Caco-2 (cell line): ENCODE measurements at regions of chr6 and their contacts with region 1.

Region 1: GRCh38 chr6:10465629-10466504 is 51.0 kb upstream of the TFAP2A start:
- DNase-seq: peak; percentile 65 to 73
- H3K4me3 ChIP-seq: no peak overlapping the region
- H3K4me3 Mint-ChIP-seq: no peak overlapping the region
- H3K27ac Mint-ChIP-seq: no peak overlapping the region
- H3K4me1 ChIP-seq: no peaks in the 10 kb centered on the region
- H3K4me1 Mint-ChIP-seq: no peaks in the 10 kb centered on the region
- H3K27me3 ChIP-seq: no peaks in the 10 kb centered on the region
- H3K27me3 Mint-ChIP-seq: peaks cover 4% of the 10 kb centered on the region
- CTCF ChIP-seq: peak; percentile 50 to 67

Region 2: DNA sequence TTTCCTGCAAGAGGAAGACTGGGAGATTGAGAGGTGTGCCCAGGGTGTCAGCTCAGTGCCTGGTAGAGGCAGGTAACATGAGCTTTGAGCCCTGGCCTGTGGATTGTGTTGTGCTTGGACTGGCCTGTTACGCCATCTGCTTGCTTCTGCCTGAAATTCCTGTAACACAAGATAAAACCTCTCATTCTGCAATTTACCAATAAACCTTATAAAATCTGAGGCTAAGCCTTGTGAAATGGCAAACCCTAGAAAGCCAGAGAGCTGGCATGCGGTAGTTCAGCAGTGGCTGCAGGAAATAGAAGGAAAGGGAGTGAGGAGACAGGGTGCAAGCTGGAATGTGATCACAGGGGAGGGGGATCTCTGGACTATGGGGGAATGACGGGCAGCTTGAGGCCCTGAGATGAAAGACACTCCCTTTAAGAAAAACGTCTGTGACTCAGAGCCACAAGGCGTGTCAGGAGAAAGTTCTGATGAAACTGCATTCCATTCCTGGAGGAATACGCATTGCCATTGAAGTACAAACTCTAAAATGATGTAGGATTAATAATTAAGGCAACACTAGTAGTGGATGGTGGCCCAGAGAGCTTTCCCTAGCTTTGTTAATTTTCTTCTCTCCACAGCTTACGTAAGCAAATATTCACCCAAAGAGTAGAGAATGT is 24.7 kb before region 1 on chr6:
- CTCF ChIA-PET with region 1: interaction called, 3 read pairs
- POLR2A ChIA-PET with region 1: no interaction called
- intact Hi-C with region 1: loop called (anchors 1 kb)
- DNase-seq: peak; percentile 82 to 90
- H3K4me3 ChIP-seq: no peak overlapping the region
- H3K4me3 Mint-ChIP-seq: peak overlapping the region; percentile 22
- H3K27ac Mint-ChIP-seq: peak overlapping the region; percentile 97
- H3K4me1 ChIP-seq: peaks cover 25% of the 10 kb centered on the region
- H3K4me1 Mint-ChIP-seq: peaks cover 12% of the 10 kb centered on the region
- H3K27me3 ChIP-seq: no peaks in the 10 kb centered on the region
- H3K27me3 Mint-ChIP-seq: no peaks in the 10 kb centered on the region
- CTCF ChIP-seq: no peak

Region 3: DNA sequence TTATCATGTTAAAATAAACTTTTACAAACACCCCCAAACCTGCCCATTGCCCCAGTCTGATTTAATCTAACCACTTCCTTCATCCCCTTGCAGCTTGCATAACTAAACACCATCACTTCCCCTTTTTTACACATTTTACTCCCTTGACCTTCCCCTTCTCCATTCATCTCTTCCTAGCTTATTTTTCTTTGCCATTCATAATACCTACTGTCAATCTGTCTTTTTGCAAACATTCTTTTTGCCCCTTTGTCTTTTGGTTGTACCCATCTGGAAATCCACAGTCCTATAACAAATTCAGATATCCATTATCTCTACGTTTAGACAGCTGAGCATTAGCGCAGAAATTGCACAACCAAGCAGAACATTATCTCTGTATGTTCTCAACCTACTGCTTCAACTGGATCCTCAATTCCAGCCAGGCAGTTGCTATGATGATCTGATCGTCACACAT is 177.4 kb after region 1 on chr6:
- CTCF ChIA-PET with region 1: no interaction called
- POLR2A ChIA-PET with region 1: no interaction called
- intact Hi-C with region 1: no loop called
- DNase-seq: no peak
- H3K4me3 ChIP-seq: no peak overlapping the region
- H3K4me3 Mint-ChIP-seq: no peak overlapping the region
- H3K27ac Mint-ChIP-seq: no peak overlapping the region
- H3K4me1 ChIP-seq: no peaks in the 10 kb centered on the region
- H3K4me1 Mint-ChIP-seq: peaks cover 10% of the 10 kb centered on the region
- H3K27me3 ChIP-seq: no peaks in the 10 kb centered on the region
- H3K27me3 Mint-ChIP-seq: no peaks in the 10 kb centered on the region
- CTCF ChIP-seq: no peak

Region 4: DNA sequence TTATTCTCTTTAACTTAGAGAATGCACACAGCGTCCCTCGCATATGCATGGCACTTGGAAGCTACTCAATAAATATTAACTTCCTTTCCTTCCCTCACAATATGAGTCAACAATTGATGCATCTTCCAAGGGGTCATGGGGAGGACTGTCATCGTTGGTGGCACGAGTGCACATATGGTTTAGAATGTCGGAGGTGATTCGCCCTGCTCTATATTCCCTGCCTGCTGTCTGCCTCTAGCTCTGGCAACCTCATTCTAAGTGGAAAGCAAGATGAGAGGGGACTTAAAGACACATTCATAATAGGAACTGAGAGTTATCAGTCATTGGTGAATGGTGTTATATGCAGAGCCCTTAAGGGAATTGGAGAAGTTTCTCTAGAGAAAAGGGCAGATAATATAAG is 327.8 kb after region 1 on chr6:
- CTCF ChIA-PET with region 1: no interaction called
- POLR2A ChIA-PET with region 1: no interaction called
- intact Hi-C with region 1: no loop called
- DNase-seq: no peak
- H3K4me3 ChIP-seq: no peak overlapping the region
- H3K4me3 Mint-ChIP-seq: no peak overlapping the region
- H3K27ac Mint-ChIP-seq: no peak overlapping the region
- H3K4me1 ChIP-seq: no peaks in the 10 kb centered on the region
- H3K4me1 Mint-ChIP-seq: no peaks in the 10 kb centered on the region
- H3K27me3 ChIP-seq: no peaks in the 10 kb centered on the region
- H3K27me3 Mint-ChIP-seq: no peaks in the 10 kb centered on the region
- CTCF ChIP-seq: no peak